Naive thymus-derived CD4-positive, alpha-beta T cell (primary cell): ENCODE measurements at regions of chr7 and their contacts with region 1.

Region 1: GRCh38 chr7:12638851-12639467 is 48.5 kb upstream of the ARL4A start:
- DNase-seq: peak in 6 of 9 donors; percentile 26 to 62 (median 54)
- ATAC-seq: peak; percentile 71
- H3K4me3 ChIP-seq: no peak overlapping the region
- H3K4me3 Mint-ChIP-seq: peak overlapping the region in 1 of 10 donors; percentile 50
- H3K27ac ChIP-seq: no peak overlapping the region
- H3K27ac Mint-ChIP-seq: no peak overlapping the region
- H3K4me1 ChIP-seq: peaks cover 0 to 7% of the 10 kb centered on the region in 2 donors
- H3K4me1 Mint-ChIP-seq: peaks cover 11 to 31% (median 23%) of the 10 kb centered on the region in 7 donors
- H3K27me3 ChIP-seq: no peaks in the 10 kb centered on the region
- H3K27me3 Mint-ChIP-seq: peaks cover 0 to 10% (median 0%) of the 10 kb centered on the region in 5 donors

Region 2: GRCh38 chr7:12524794-12525386 is 114.1 kb before region 1 on chr7:
- CTCF ChIA-PET with region 1: interaction called, 6 read pairs
- POLR2A ChIA-PET with region 1: no interaction called
- intact Hi-C with region 1: loop called (anchors 2 to 5 kb)
- DNase-seq: peak in 5 of 9 donors; percentile 10 to 36 (median 24)
- ATAC-seq: peak; percentile 59
- H3K4me3 ChIP-seq: no peak overlapping the region
- H3K4me3 Mint-ChIP-seq: no peak overlapping the region
- H3K27ac ChIP-seq: no peak overlapping the region
- H3K27ac Mint-ChIP-seq: no peak overlapping the region
- H3K4me1 ChIP-seq: no peaks in the 10 kb centered on the region
- H3K4me1 Mint-ChIP-seq: no peaks in the 10 kb centered on the region
- H3K27me3 ChIP-seq: no peaks in the 10 kb centered on the region
- H3K27me3 Mint-ChIP-seq: peaks cover 14 to 60% (median 37%) of the 10 kb centered on the region in 5 donors

Region 3: DNA sequence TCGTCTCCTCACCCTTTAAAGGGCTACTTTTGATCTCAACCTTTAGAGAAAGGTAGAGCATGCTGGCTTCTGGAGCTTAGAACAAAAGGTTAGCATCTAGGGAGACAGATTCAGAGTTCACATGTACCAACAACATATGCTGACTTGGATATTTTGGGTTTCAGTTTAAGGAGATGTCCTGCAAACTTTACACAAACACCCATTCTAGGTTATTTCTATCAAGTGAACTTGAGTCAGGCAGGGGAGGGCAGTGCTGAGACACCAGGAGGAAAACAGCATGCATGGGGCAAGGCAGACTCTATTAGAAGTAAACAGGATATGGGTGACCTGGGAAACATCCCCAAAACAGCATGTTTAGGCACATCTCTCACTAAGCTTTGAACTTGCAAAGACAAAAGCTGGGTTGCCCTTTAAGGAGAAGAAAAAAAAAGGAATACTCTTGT is 92.3 kb after region 1 on chr7:
- CTCF ChIA-PET with region 1: no interaction called
- POLR2A ChIA-PET with region 1: no interaction called
- intact Hi-C with region 1: loop called in 1 of 2 experiments (anchors 10 kb)
- DNase-seq: peak in 2 of 9 donors; percentile 6 to 19
- ATAC-seq: peak; percentile 40
- H3K4me3 ChIP-seq: no peak overlapping the region
- H3K4me3 Mint-ChIP-seq: peak overlapping the region in 9 of 10 donors; percentile 40 to 86 (median 72)
- H3K27ac ChIP-seq: peak overlapping the region; percentile 6
- H3K27ac Mint-ChIP-seq: peak overlapping the region; percentile 26 to 95 (median 78)
- H3K4me1 ChIP-seq: peaks cover 13 to 17% of the 10 kb centered on the region in 2 donors
- H3K4me1 Mint-ChIP-seq: peaks cover 10 to 33% (median 26%) of the 10 kb centered on the region in 7 donors
- H3K27me3 ChIP-seq: no peaks in the 10 kb centered on the region
- H3K27me3 Mint-ChIP-seq: peaks cover 0 to 4% (median 0%) of the 10 kb centered on the region in 5 donors

Region 4: DNA sequence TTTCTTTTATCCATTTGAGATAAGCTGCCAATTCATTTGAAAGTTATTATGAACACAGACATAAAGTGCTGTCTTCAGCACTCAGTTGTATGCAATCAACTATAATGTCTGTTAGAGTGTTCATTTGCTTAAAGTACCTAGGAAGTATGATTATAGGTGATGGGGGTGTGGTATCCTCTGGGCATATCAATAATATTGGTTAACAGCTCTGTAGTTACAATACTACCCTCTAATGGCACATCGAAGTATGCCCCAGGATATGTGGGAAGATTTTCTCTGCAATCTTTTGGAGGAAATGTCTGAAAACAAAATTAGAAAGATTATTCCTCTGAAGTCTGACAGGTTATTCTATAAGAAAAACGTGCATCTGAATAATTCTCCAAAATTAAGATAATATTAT is 478.1 kb after region 1 on chr7:
- CTCF ChIA-PET with region 1: no interaction called
- POLR2A ChIA-PET with region 1: no interaction called
- intact Hi-C with region 1: loop called in 1 of 2 experiments (anchors 5 kb)
- DNase-seq: no peak
- ATAC-seq: no peak
- H3K4me3 ChIP-seq: no peak overlapping the region
- H3K4me3 Mint-ChIP-seq: no peak overlapping the region
- H3K27ac ChIP-seq: no peak overlapping the region
- H3K27ac Mint-ChIP-seq: no peak overlapping the region
- H3K4me1 ChIP-seq: no peaks in the 10 kb centered on the region
- H3K4me1 Mint-ChIP-seq: no peaks in the 10 kb centered on the region
- H3K27me3 ChIP-seq: no peaks in the 10 kb centered on the region
- H3K27me3 Mint-ChIP-seq: peaks cover 0 to 5% (median 3%) of the 10 kb centered on the region in 5 donors

Region 5: DNA sequence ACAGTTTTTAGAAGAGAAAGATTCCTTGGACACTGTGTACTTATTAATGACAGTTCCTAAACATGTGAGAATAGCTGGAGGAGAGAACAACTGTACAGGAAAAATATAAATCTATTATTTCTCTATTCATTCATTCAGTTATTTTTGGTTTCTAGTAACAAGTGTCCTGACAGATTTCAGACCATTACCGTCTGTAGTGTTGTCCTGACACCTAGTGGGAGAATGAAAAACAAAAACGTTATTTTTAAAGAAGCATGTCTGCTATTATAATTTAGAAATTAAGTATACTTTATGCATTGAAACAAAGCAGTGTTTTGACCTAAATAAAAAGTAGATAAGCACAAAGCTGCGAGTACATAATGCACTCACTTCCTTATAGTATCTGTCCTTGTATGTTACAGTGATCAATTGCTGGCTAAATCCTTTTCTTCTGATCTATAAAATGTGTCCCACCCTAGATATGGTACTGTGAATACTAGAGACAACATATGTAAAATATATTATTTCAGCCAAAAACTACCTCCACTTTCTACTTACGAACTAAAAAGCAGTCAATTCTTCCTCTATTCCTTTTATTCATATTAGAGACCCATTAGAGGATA is 624.1 kb after region 1 on chr7:
- CTCF ChIA-PET with region 1: interaction called, 7 read pairs
- POLR2A ChIA-PET with region 1: no interaction called
- intact Hi-C with region 1: loop called (anchors 1 kb)
- DNase-seq: peak in 6 of 9 donors; percentile 4 to 42 (median 22)
- ATAC-seq: peak; percentile 52
- H3K4me3 ChIP-seq: no peak overlapping the region
- H3K4me3 Mint-ChIP-seq: no peak overlapping the region
- H3K27ac ChIP-seq: no peak overlapping the region
- H3K27ac Mint-ChIP-seq: no peak overlapping the region
- H3K4me1 ChIP-seq: no peaks in the 10 kb centered on the region
- H3K4me1 Mint-ChIP-seq: no peaks in the 10 kb centered on the region
- H3K27me3 ChIP-seq: no peaks in the 10 kb centered on the region
- H3K27me3 Mint-ChIP-seq: peaks cover 0 to 11% (median 5%) of the 10 kb centered on the region in 5 donors

Region 6: GRCh38 chr7:13742811-13743210 is 1103.9 kb after region 1 on chr7:
- CTCF ChIA-PET with region 1: no interaction called
- POLR2A ChIA-PET with region 1: no interaction called
- intact Hi-C with region 1: loop called (anchors 2 to 10 kb)
- DNase-seq: no peak
- ATAC-seq: no peak
- H3K4me3 ChIP-seq: no peak overlapping the region
- H3K4me3 Mint-ChIP-seq: no peak overlapping the region
- H3K27ac ChIP-seq: no peak overlapping the region
- H3K27ac Mint-ChIP-seq: no peak overlapping the region
- H3K4me1 ChIP-seq: no peaks in the 10 kb centered on the region
- H3K4me1 Mint-ChIP-seq: no peaks in the 10 kb centered on the region
- H3K27me3 ChIP-seq: no peaks in the 10 kb centered on the region
- H3K27me3 Mint-ChIP-seq: peaks cover 0 to 3% (median 0%) of the 10 kb centered on the region in 5 donors